Activated CD4-positive, alpha-beta T cell treated with anti-CD3 and anti-CD28 coated beads, Interleukin-2, amount 10 ng/mL, durations not matched to agents 24 days and 14 days (primary cell): ENCODE measurements at regions of chr6 and their contacts with region 1.

Region 1: GRCh38 chr6:138109042-138109997 is 2.1 kb upstream of the PERP start:
- DNase-seq: peak; percentile 93
- H3K4me3 Mint-ChIP-seq: no peak overlapping the region
- H3K27ac Mint-ChIP-seq: no peak overlapping the region
- H3K4me1 Mint-ChIP-seq: peaks cover 22% of the 10 kb centered on the region
- H3K27me3 Mint-ChIP-seq: peaks cover 45% of the 10 kb centered on the region

Region 2: GRCh38 chr6:136803608-136804007 is 1305.7 kb before region 1 on chr6:
- intact Hi-C with region 1: no loop called
- DNase-seq: no peak
- H3K4me3 Mint-ChIP-seq: no peak overlapping the region
- H3K27ac Mint-ChIP-seq: no peak overlapping the region
- H3K4me1 Mint-ChIP-seq: no peaks in the 10 kb centered on the region
- H3K27me3 Mint-ChIP-seq: peaks cover 9% of the 10 kb centered on the region

Region 3: GRCh38 chr6:137497721-137498463 is 611.4 kb before region 1 on chr6:
- intact Hi-C with region 1: loop called (anchors 5 kb)
- DNase-seq: peak; percentile 67
- H3K4me3 Mint-ChIP-seq: peak overlapping the region; percentile 52
- H3K27ac Mint-ChIP-seq: no peak overlapping the region
- H3K4me1 Mint-ChIP-seq: peaks cover 30% of the 10 kb centered on the region
- H3K27me3 Mint-ChIP-seq: peaks cover 82% of the 10 kb centered on the region

Region 4: DNA sequence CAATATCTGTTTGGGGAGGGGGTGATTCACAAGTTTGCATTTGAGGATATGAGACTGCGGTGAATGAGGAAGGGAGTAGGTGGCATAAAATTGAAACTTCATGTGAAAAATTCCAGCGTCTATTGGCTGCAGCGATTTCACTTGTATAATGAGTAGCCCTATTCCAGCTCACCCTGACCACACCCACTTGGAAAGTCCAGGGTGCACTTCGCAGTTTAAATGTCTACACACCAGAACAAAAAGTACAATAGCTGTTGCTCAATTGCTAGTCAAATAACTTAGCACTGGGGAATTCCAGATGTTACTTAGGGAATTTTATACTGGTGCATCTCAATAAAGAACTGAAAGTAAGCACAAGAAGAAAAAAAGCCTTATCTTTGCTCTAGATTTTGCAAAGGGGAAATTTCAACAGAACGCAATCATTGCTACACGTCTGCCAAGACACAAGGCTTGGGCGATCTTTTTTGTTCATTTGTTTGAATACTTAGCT is 236.0 kb before region 1 on chr6:
- intact Hi-C with region 1: loop called (anchors 2 kb)
- DNase-seq: peak; percentile 89
- H3K4me3 Mint-ChIP-seq: peak overlapping the region; percentile 87
- H3K27ac Mint-ChIP-seq: peak overlapping the region; percentile 86
- H3K4me1 Mint-ChIP-seq: peaks cover 44% of the 10 kb centered on the region
- H3K27me3 Mint-ChIP-seq: no peaks in the 10 kb centered on the region

Region 5: GRCh38 chr6:138001750-138002349 is 107.5 kb before region 1 on chr6:
- intact Hi-C with region 1: loop called (anchors 1 kb)
- DNase-seq: peak; percentile 89
- H3K4me3 Mint-ChIP-seq: no peak overlapping the region
- H3K27ac Mint-ChIP-seq: no peak overlapping the region
- H3K4me1 Mint-ChIP-seq: peaks cover 18% of the 10 kb centered on the region
- H3K27me3 Mint-ChIP-seq: peaks cover 9% of the 10 kb centered on the region

Region 6: DNA sequence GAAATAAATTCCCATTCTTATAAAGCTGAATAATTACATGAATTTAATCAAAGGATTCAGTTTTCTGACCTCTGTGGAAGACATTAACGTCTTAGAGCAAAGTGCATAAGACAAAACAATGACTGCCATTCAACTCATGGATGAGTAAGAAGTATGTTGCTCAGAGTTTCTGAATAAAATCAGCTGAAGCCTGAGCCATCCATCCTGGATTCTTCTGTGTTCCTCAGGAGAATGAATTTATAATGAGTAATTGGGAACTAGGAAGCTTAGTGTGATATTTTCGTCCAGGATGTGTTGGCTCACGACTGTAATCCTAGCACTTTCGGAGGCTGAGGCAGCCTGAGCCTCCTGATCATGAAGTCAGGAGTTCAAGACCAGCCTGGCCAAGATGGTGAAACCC is 64.9 kb before region 1 on chr6:
- intact Hi-C with region 1: no loop called
- DNase-seq: no peak
- H3K4me3 Mint-ChIP-seq: no peak overlapping the region
- H3K27ac Mint-ChIP-seq: no peak overlapping the region
- H3K4me1 Mint-ChIP-seq: no peaks in the 10 kb centered on the region
- H3K27me3 Mint-ChIP-seq: peaks cover 20% of the 10 kb centered on the region

Region 7: DNA sequence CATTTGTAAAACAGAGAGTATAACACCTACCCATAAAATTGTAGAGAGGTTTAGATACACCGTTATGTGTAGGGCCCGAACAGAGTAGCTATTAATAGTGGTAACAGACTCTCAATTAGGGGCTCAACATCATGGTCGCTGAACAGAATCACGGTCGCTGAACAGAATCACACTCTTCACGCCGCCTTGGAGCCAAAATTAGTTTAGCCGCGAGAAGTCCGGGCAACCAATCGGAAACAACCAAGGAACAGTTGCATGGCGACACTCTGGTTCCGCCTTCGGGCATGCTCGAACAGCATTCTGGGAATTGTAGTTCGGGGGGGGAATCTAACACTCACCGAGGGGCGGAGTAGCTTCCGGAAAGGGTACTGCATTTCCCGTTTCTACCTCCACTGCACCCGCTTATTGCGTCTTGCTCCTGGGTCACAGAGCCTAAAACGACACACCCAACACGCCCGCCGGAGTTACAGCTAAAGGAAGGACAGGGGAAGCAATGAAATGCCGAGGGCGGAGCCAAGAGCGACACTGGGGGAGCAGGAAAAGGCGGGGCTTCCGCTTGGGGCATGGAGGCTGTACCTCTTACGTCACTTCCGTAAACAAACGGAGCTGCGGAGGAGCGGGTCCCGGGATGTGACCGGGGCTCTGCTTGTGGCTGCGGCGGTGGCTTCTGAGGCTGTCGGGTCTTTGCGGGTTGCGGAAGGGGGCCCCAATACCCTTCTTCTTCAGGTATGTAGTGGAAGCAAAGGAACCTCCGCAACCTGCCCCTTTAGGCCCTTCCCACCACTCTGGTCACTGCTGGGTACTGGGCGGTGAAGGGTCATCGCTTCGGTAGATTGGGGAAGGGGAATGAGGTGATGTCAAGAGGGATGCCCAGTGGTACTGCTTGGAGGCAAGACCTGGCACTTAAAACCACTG is 664.1 kb after region 1 on chr6 and contains the start of gene CCDC28A:
- intact Hi-C with region 1: loop called (anchors 5 kb)
- DNase-seq: peak; percentile 97
- H3K4me3 Mint-ChIP-seq: peak within 1 kb of the TSS; percentile 93
- H3K27ac Mint-ChIP-seq: peak within 1 kb of the TSS; percentile 99
- H3K4me1 Mint-ChIP-seq: peaks cover 20% of the 10 kb centered on the region
- H3K27me3 Mint-ChIP-seq: no peaks in the 10 kb centered on the region
- total RNA-seq, gene CCDC28A: 17.5 and 19.2 TPM in 2 replicates